ENCODE measurements at regions of chr11 and their contacts with region 1.

Region 1: DNA sequence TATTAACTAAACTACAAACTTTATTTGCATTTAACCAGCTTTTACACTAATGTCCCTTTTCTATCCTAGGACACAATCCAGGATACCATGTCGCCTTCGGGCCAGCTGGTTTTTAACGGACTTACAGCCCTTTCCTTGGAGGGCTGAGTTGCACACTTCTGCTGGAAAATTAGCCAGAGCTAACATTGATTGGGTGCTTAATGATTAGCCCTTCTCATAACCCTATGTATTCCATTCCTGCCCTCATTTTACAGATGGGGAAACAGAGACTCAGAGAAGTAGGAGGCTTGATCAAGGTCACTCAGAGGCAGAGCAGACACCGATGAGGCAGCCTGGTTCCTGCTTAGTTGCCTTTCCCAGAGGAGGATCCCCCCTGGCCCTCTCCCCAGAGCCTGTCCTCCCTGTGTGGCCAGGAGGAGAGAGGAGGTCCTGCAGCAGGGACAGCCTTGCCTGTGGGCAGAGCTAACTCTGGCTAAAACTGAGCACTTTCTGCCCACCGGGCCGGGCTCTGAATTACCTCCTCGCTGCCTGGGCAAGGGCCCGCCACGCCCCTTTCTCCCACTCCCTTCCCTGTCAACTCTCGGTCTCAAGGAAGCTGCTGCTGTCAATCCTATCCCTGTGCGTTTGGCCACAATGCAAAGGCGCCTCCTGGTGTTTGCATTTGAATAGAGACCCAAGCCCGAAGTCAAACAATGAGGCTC is 59.6 kb upstream of the PAX6 start:
- DNase-seq: peak; percentile 19 to 53
- ATAC-seq: peak; percentile 53 to 89 (median 67)
- H3K4me3 ChIP-seq: peak overlapping the region; percentile 36
- H3K27ac ChIP-seq: no peak overlapping the region
- H3K4me1 ChIP-seq: no peaks in the 10 kb centered on the region
- H3K27me3 ChIP-seq: peaks cover 3 to 25% (median 4%) of the 10 kb centered on the region in 3 donors
- CTCF ChIP-seq: peak; percentile 67

Region 2: GRCh38 chr11:31107062-31107461 is 763.7 kb before region 1 on chr11:
- intact Hi-C with region 1: loop called (anchors 5 kb)
- DNase-seq: peak; percentile 17 to 59
- ATAC-seq: peak in 2 of 4 donors; percentile 51 to 79
- H3K4me3 ChIP-seq: no peak overlapping the region
- H3K27ac ChIP-seq: no peak overlapping the region
- H3K4me1 ChIP-seq: no peaks in the 10 kb centered on the region
- H3K27me3 ChIP-seq: no peaks in the 10 kb centered on the region
- CTCF ChIP-seq: peak; percentile 47

Region 3: DNA sequence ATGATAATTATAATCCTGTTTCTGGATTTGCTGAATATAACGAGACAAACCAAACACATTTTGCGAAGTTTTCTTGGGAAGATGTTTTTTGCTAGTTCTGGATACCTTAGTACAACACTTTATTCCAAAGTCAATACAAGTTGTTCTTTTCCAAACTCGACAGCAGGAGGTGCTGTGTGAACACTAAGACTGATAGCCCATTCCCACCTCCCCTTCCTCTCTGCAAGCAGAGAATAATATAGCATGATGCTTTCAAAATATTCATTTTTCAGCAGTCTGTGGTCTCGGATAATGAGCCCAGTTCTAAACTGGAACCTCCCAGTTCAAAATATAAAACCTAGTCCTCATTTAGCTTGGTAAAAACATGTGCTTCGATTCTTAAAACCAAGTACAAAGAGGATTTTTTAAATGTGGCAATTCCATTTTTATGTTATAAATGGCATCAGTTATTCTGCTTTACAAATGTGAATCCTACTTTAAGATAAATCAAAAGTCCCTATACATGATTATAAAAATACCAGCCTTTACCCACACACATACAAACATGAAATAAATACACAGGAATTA is 630.3 kb before region 1 on chr11:
- intact Hi-C with region 1: loop called in 1 of 2 experiments (anchors 5 kb)
- DNase-seq: no peak
- ATAC-seq: peak in 1 of 4 donors; percentile 75
- H3K4me3 ChIP-seq: no peak overlapping the region
- H3K27ac ChIP-seq: no peak overlapping the region
- H3K4me1 ChIP-seq: no peaks in the 10 kb centered on the region
- H3K27me3 ChIP-seq: no peaks in the 10 kb centered on the region
- CTCF ChIP-seq: peak; percentile 52

Region 4: DNA sequence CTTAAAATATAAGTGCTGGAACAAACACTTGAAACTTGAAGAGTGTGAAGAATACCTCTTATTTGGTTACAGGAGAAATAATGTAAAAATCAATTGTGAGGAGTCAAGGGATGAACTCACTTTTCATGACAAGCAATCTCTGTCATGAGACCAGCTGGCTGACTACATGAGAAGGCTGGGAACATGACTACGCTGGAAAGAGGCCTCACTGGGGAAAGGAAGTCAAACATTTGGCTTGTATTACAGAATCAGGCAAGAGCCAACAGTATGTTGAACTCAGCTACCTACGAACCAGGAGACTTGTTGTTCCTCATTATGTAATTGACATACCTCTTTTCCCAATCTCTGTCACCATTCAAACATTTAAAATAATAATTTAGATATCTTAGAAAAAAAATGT is 515.6 kb before region 1 on chr11:
- intact Hi-C with region 1: no loop called
- DNase-seq: no peak
- ATAC-seq: peak in 1 of 4 donors; percentile 69
- H3K4me3 ChIP-seq: no peak overlapping the region
- H3K27ac ChIP-seq: no peak overlapping the region
- H3K4me1 ChIP-seq: no peaks in the 10 kb centered on the region
- H3K27me3 ChIP-seq: no peaks in the 10 kb centered on the region
- CTCF ChIP-seq: no peak

Region 5: DNA sequence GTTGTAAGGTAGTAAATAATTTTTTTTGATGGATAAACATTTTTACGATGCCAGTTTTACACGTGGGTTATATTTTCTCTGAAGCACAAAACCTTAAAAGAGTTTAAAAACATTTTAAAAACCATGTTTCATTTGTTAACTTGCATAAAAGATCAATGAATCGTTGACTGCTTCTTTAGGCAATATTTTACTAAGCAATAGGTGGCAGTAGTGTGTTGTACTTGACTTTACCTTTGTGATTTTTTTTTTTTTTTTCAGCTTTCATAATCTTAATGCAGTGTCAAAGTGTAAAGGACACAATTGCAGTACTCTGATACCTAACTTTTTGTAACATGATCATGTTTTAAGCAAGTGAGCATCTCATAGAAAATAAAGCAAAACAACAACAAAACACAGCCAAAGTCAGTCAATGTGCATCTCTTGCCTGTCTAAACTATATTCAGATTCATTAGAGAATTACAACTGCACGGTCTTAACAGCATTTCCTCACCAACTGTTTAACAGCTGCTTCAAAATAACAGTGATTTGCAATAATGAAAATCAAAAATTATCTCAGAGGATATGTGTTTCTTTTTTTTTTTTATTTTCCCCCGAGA is 473.4 kb before region 1 on chr11:
- intact Hi-C with region 1: loop called (anchors 5 to 10 kb)
- DNase-seq: no peak
- ATAC-seq: no peak
- H3K4me3 ChIP-seq: no peak overlapping the region
- H3K27ac ChIP-seq: no peak overlapping the region
- H3K4me1 ChIP-seq: no peaks in the 10 kb centered on the region
- H3K27me3 ChIP-seq: no peaks in the 10 kb centered on the region
- CTCF ChIP-seq: peak; percentile 53

Region 6: GRCh38 chr11:31940371-31941037 is 69.7 kb after region 1 on chr11:
- intact Hi-C with region 1: no loop called
- DNase-seq: no peak
- ATAC-seq: no peak
- H3K4me3 ChIP-seq: no peak overlapping the region
- H3K27ac ChIP-seq: no peak overlapping the region
- H3K4me1 ChIP-seq: no peaks in the 10 kb centered on the region
- H3K27me3 ChIP-seq: no peaks in the 10 kb centered on the region
- CTCF ChIP-seq: no peak